A549 (cell line): ENCODE measurements at regions of chr7 and their contacts with region 1.

Region 1: DNA sequence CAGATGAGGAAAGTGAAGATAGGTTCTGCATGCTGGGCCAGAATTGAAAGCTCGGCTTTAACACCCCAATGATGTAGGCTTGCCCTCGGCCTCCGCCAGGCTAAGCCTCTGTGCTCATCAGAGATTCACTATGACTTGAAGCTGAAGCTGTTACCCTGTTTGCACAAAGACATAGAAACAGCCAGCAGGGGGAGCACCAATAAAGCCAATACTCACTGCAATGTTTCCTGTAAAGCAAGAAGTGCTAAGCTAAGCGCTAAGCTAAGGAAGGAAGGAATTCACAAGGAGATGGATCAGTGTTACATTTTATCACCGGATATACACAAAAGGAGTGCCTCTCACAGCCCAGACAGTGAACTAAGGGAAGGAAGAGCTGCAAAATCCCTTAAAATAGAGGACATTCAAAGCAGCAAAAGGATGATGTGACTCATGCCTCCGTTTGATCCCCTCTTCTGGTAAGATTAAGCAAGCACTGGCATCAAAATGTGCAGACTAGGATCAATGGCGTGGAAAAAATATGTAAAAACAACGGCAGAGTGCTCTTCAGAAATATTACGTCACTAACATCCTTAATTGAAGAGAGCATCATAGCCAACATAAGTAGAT is 153.8 kb downstream of the COBL start:
- DNase-seq: peak; percentile 41 to 88
- ATAC-seq: peak; percentile 97 to 99
- H3K4me3 ChIP-seq: no peak overlapping the region
- H3K27ac ChIP-seq: no peak overlapping the region
- H3K4me1 ChIP-seq: peaks cover 4% of the 10 kb centered on the region; the same call in 1 of the 3 replicates
- CTCF ChIP-seq: peak; percentile 94
- EP300 ChIP-seq: no peak
- POLR2A ChIP-seq: no peak
- RAD21 ChIP-seq: peak; percentile 86 to 91

Region 2: GRCh38 chr7:50092579-50093491 is 1070.0 kb before region 1 on chr7 and contains the start of gene ZPBP:
- CTCF ChIA-PET with region 1: interaction called, 29 read pairs
- POLR2A ChIA-PET with region 1: interaction called, 3 read pairs
- DNase-seq: peak in 1 of 2 experiments; percentile 32
- ATAC-seq: peak in 1 of 2 experiments; percentile 38; a peak in 3 of 6 replicates
- H3K4me3 ChIP-seq: no peak within 1 kb of the TSS
- H3K27ac ChIP-seq: no peak within 1 kb of the TSS
- H3K4me1 ChIP-seq: no peaks in the 10 kb centered on the region
- CTCF ChIP-seq: peak; percentile 80
- EP300 ChIP-seq: no peak
- POLR2A ChIP-seq: no peak
- RAD21 ChIP-seq: peak; percentile 78 to 81
- polyA plus RNA-seq, gene ZPBP: not detected in 2 replicates

Region 3: GRCh38 chr7:50467817-50468610 is 694.8 kb before region 1 on chr7:
- CTCF ChIA-PET with region 1: interaction called, 111 read pairs
- POLR2A ChIA-PET with region 1: no interaction called
- DNase-seq: peak; percentile 60 to 71
- ATAC-seq: peak; percentile 86 to 94
- H3K4me3 ChIP-seq: no peak overlapping the region; the same call in 2 of the 3 replicates
- H3K27ac ChIP-seq: peak overlapping the region; percentile 19 to 67; a peak in 4 of 6 replicates
- H3K4me1 ChIP-seq: 0 out of 3 replicates have a peak, but pooled peaks cover 3% of the 10 kb centered on the region
- CTCF ChIP-seq: peak; percentile 88
- EP300 ChIP-seq: no peak
- POLR2A ChIP-seq: no peak
- RAD21 ChIP-seq: peak; percentile 96 to 97

Region 4: GRCh38 chr7:51045319-51046102 is 117.3 kb before region 1 on chr7:
- CTCF ChIA-PET with region 1: no interaction called
- POLR2A ChIA-PET with region 1: no interaction called
- DNase-seq: peak; percentile 49 to 66
- ATAC-seq: peak; percentile 91
- H3K4me3 ChIP-seq: no peak overlapping the region
- H3K27ac ChIP-seq: peak overlapping the region; percentile 39 to 63; a peak in 4 of 6 replicates
- H3K4me1 ChIP-seq: peaks cover 15% of the 10 kb centered on the region
- CTCF ChIP-seq: no peak
- EP300 ChIP-seq: peak; percentile 50 to 66; a peak in 2 of 5 replicates
- POLR2A ChIP-seq: no peak
- RAD21 ChIP-seq: peak in 1 of 2 experiments; percentile 39; a peak in 2 of 5 replicates

Region 5: DNA sequence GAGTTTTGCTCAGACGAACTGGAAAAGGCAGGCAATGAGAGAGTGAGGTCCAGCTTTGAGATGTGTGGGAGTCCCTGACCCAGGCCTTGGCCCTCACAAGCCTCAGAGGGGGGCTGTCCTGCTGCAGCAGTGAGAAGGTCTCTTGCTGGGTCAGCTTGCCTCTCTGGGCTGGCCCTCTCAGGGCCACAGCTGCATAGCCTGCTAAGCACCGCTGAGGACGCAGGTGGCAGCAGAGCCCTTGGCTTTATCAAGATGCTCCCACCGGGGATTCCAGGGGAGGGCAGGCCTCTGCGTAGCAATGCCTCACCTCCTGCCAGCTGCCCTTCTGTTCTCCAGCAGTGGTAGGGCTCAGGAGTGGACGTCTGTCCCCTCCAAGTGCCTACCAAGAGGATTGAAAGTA is 25.1 kb after region 1 on chr7:
- CTCF ChIA-PET with region 1: interaction called, 12 read pairs
- POLR2A ChIA-PET with region 1: no interaction called
- DNase-seq: peak; percentile 36 to 41
- ATAC-seq: peak; percentile 77 to 92; a peak in 5 of 6 replicates
- H3K4me3 ChIP-seq: no peak overlapping the region
- H3K27ac ChIP-seq: no peak overlapping the region
- H3K4me1 ChIP-seq: no peaks in the 10 kb centered on the region
- CTCF ChIP-seq: no peak
- EP300 ChIP-seq: no peak
- POLR2A ChIP-seq: no peak
- RAD21 ChIP-seq: peak; percentile 16 to 52; a peak in 2 of 5 replicates

Region 6: GRCh38 chr7:51357821-51358220 is 195.0 kb after region 1 on chr7:
- CTCF ChIA-PET with region 1: interaction called, 30 read pairs
- POLR2A ChIA-PET with region 1: no interaction called
- DNase-seq: no peak
- ATAC-seq: no peak; a peak in 1 of 6 replicates
- H3K4me3 ChIP-seq: no peak overlapping the region
- H3K27ac ChIP-seq: no peak overlapping the region
- H3K4me1 ChIP-seq: no peaks in the 10 kb centered on the region
- CTCF ChIP-seq: no peak; the same call in 1 of the 3 replicates
- EP300 ChIP-seq: no peak
- POLR2A ChIP-seq: no peak
- RAD21 ChIP-seq: peak; percentile 33 to 39; a peak in 3 of 5 replicates

Region 7: DNA sequence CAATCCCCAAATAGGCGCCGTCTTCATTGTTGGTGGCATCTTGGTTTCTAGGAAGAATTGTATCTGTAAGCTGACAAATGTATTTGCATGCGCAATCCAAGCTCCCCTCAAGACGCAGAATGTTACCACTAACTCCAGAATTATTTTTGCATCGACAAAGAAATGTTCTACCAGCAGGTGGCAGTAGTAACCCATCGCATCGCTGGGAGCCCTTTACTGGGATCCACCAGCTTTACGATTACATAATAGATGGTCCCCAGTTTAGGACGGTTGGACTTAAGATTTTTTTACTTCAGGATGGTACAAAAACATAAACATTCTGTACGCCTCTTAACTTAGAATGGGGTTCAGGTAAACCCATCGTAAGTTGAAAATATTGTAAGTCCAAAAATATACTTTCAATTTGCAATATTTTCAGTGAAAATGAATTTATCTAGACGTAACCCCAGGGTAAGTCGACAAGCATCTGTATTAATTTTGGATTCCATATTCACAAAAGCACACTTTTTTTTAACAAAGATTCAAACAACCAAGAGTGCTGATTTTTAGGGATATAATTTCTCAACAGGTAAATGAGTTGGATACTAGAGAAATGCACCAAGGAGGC is 267.8 kb after region 1 on chr7:
- CTCF ChIA-PET with region 1: interaction called, 98 read pairs
- POLR2A ChIA-PET with region 1: no interaction called
- DNase-seq: peak; percentile 51 to 74
- ATAC-seq: peak; percentile 57 to 82; a peak in 4 of 6 replicates
- H3K4me3 ChIP-seq: no peak overlapping the region
- H3K27ac ChIP-seq: no peak overlapping the region
- H3K4me1 ChIP-seq: no peaks in the 10 kb centered on the region
- CTCF ChIP-seq: peak; percentile 84
- EP300 ChIP-seq: no peak
- POLR2A ChIP-seq: no peak
- RAD21 ChIP-seq: peak; percentile 88 to 91

Region 8: GRCh38 chr7:51455948-51456347 is 293.1 kb after region 1 on chr7:
- CTCF ChIA-PET with region 1: no interaction called
- POLR2A ChIA-PET with region 1: no interaction called
- DNase-seq: no peak
- ATAC-seq: no peak
- H3K4me3 ChIP-seq: no peak overlapping the region
- H3K27ac ChIP-seq: no peak overlapping the region
- H3K4me1 ChIP-seq: no peaks in the 10 kb centered on the region
- CTCF ChIP-seq: no peak
- EP300 ChIP-seq: no peak
- POLR2A ChIP-seq: no peak
- RAD21 ChIP-seq: no peak